Activated CD4-positive, alpha-beta memory T cell treated with anti-CD3 and anti-CD28 coated beads for 36 hours (primary cell): ENCODE measurements at regions of chr4 and their contacts with region 1.

Region 1: DNA sequence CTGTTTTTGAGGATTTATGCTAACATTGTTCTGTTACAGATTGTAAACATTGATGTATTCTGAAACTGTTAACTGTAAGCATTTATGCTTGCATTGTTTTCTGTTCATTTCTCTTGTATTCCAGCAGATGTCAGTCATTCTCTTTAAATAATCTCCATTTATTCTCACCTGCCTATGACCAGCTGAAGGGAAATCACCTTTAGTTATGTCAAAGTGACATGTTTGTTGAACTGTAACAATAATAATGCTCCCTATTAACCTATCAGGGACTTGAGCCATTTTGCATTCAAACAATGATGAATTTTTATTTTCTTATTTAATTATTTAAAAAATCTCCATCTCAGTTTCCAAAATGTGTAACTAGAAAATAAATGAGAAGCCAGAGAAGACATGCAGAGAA is 58.0 kb downstream of the SPCS3 start:
- DNase-seq: no peak
- H3K4me3 Mint-ChIP-seq: no peak overlapping the region
- H3K27ac Mint-ChIP-seq: no peak overlapping the region
- H3K4me1 Mint-ChIP-seq: no peaks in the 10 kb centered on the region
- H3K27me3 Mint-ChIP-seq: peaks cover 3% of the 10 kb centered on the region

Region 2: GRCh38 chr4:176642472-176642871 is 264.7 kb after region 1 on chr4:
- CTCF ChIA-PET with region 1: no interaction called
- POLR2A ChIA-PET with region 1: no interaction called
- intact Hi-C with region 1: loop called (anchors 10 kb)
- DNase-seq: no peak
- H3K4me3 Mint-ChIP-seq: no peak overlapping the region
- H3K27ac Mint-ChIP-seq: no peak overlapping the region
- H3K4me1 Mint-ChIP-seq: no peaks in the 10 kb centered on the region
- H3K27me3 Mint-ChIP-seq: no peaks in the 10 kb centered on the region

Region 3: DNA sequence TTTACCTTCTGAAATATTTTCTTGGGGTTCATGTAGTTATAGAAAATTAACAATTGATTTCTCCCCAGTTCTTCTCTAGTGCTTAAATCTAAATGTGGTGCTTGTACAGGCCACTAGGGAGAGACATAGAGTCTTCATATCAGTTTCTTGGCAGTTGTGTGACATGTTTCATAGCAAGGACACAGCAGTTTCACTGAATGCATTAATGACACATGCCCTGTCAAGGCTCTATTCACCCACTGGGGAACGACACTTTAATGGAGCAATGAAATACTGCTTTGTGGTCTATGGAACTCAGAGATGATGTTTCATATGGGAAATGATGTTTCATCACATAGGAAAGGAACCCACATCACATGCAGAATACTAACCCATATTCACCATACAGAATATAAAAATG is 412.2 kb after region 1 on chr4:
- CTCF ChIA-PET with region 1: no interaction called
- POLR2A ChIA-PET with region 1: no interaction called
- intact Hi-C with region 1: loop called (anchors 5 kb)
- DNase-seq: no peak
- H3K4me3 Mint-ChIP-seq: no peak overlapping the region
- H3K27ac Mint-ChIP-seq: no peak overlapping the region
- H3K4me1 Mint-ChIP-seq: peaks cover 6% of the 10 kb centered on the region
- H3K27me3 Mint-ChIP-seq: peaks cover 39% of the 10 kb centered on the region